ENCODE measurements at regions of chr9 and their contacts with region 1.

Region 1: GRCh38 chr9:130707225-130707976 is 13.8 kb downstream of the EXOSC2 start:
- DNase-seq: peak; percentile 35 to 72 (median 64)
- ATAC-seq: peak; percentile 73
- H3K4me3 ChIP-seq: no peak overlapping the region
- H3K4me3 Mint-ChIP-seq: no peak overlapping the region
- H3K27ac ChIP-seq: no peak overlapping the region
- H3K27ac Mint-ChIP-seq: peak overlapping the region in 4 of 9 donors; percentile 52 to 81 (median 65)
- H3K4me1 ChIP-seq: peaks cover 0 to 4% of the 10 kb centered on the region in 2 donors
- H3K4me1 Mint-ChIP-seq: peaks cover under 1 to 9% (median 2%) of the 10 kb centered on the region in 7 donors
- H3K27me3 ChIP-seq: no peaks in the 10 kb centered on the region
- H3K27me3 Mint-ChIP-seq: no peaks in the 10 kb centered on the region

Region 2: GRCh38 chr9:130693426-130694191 is 13.8 kb before region 1 on chr9 and contains the start of gene EXOSC2:
- CTCF ChIA-PET with region 1: interaction called, 10 read pairs
- POLR2A ChIA-PET with region 1: interaction called, 14 read pairs
- intact Hi-C with region 1: loop called (anchors 1 kb)
- DNase-seq: peak; percentile 76 to 99 (median 89)
- ATAC-seq: peak; percentile 100
- H3K4me3 ChIP-seq: peak within 1 kb of the TSS; percentile 91
- H3K4me3 Mint-ChIP-seq: peak within 1 kb of the TSS; percentile 83 to 98 (median 95)
- H3K27ac ChIP-seq: peak within 1 kb of the TSS; percentile 85
- H3K27ac Mint-ChIP-seq: peak within 1 kb of the TSS; percentile 88 to 97 (median 94)
- H3K4me1 ChIP-seq: peaks cover 13 to 20% of the 10 kb centered on the region in 2 donors
- H3K4me1 Mint-ChIP-seq: peaks cover 20 to 54% (median 46%) of the 10 kb centered on the region in 7 donors
- H3K27me3 ChIP-seq: no peaks in the 10 kb centered on the region
- H3K27me3 Mint-ChIP-seq: no peaks in the 10 kb centered on the region
- total RNA-seq, gene EXOSC2: 44.2 to 60.7 (median 59.5) TPM

Region 3: GRCh38 chr9:130732131-130732530 is 24.7 kb after region 1 on chr9:
- CTCF ChIA-PET with region 1: interaction called, 4 read pairs
- POLR2A ChIA-PET with region 1: no interaction called
- intact Hi-C with region 1: loop called in 1 of 2 experiments (anchors 1 kb)
- DNase-seq: no peak
- ATAC-seq: no peak
- H3K4me3 ChIP-seq: no peak overlapping the region
- H3K4me3 Mint-ChIP-seq: no peak overlapping the region
- H3K27ac ChIP-seq: no peak overlapping the region
- H3K27ac Mint-ChIP-seq: no peak overlapping the region
- H3K4me1 ChIP-seq: no peaks in the 10 kb centered on the region
- H3K4me1 Mint-ChIP-seq: peaks cover 8 to 40% (median 22%) of the 10 kb centered on the region in 7 donors
- H3K27me3 ChIP-seq: no peaks in the 10 kb centered on the region
- H3K27me3 Mint-ChIP-seq: no peaks in the 10 kb centered on the region

Region 4: GRCh38 chr9:130866474-130866965 is 159.1 kb after region 1 on chr9:
- CTCF ChIA-PET with region 1: interaction called, 8 read pairs
- POLR2A ChIA-PET with region 1: no interaction called
- intact Hi-C with region 1: loop called (anchors 1 kb)
- DNase-seq: peak; percentile 8 to 54 (median 40)
- ATAC-seq: peak; percentile 56
- H3K4me3 ChIP-seq: no peak overlapping the region
- H3K4me3 Mint-ChIP-seq: no peak overlapping the region
- H3K27ac ChIP-seq: no peak overlapping the region
- H3K27ac Mint-ChIP-seq: no peak overlapping the region
- H3K4me1 ChIP-seq: no peaks in the 10 kb centered on the region
- H3K4me1 Mint-ChIP-seq: peaks cover 2 to 9% (median 5%) of the 10 kb centered on the region in 7 donors
- H3K27me3 ChIP-seq: no peaks in the 10 kb centered on the region
- H3K27me3 Mint-ChIP-seq: no peaks in the 10 kb centered on the region

Region 5: GRCh38 chr9:130940693-130941576 is 233.5 kb after region 1 on chr9:
- CTCF ChIA-PET with region 1: no interaction called
- POLR2A ChIA-PET with region 1: no interaction called
- intact Hi-C with region 1: loop called in 1 of 2 experiments (anchors 2 kb)
- DNase-seq: peak; percentile 30 to 78 (median 56)
- ATAC-seq: peak; percentile 83
- H3K4me3 ChIP-seq: no peak overlapping the region
- H3K4me3 Mint-ChIP-seq: peak overlapping the region in 8 of 10 donors; percentile 10 to 62 (median 52)
- H3K27ac ChIP-seq: no peak overlapping the region
- H3K27ac Mint-ChIP-seq: peak overlapping the region in 1 of 9 donors; percentile 52
- H3K4me1 ChIP-seq: no peaks in the 10 kb centered on the region
- H3K4me1 Mint-ChIP-seq: peaks cover 0 to 15% (median 10%) of the 10 kb centered on the region in 7 donors
- H3K27me3 ChIP-seq: peaks cover 0 to 2% of the 10 kb centered on the region in 2 donors
- H3K27me3 Mint-ChIP-seq: peaks cover 34 to 71% (median 58%) of the 10 kb centered on the region in 5 donors

Region 6: DNA sequence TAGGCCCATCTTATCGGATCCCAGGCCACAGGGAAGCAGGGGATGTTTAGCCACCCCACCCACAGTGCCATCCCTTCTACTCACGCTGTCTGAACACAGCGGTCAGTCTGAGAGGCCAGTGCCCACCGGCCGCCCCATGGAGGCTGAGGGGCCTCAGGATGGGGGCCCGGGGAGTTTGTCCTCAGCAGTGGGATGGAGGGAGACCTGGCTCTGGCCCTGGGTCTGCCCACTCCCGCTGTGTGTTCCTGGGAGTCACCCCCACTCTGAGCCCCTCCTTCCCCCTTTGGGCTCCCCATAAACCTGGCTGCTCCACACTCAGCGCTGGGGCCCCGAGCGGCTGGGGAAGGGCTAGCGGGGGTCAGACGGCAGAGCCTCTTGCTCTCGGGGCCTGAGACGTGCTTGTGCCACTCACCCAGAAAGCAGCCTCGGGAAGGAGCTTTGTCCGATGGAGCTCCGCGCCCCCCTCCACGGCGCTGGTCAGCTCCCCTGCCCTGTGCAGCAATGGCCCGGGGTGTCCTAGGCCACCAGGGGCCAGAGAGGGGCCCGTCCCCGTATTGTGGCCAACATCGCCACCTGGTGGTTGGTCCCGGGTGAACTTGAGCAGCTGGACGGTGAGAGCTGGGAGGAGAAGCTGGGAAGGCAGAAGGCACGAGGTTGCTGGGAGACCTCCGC is 290.7 kb after region 1 on chr9:
- CTCF ChIA-PET with region 1: no interaction called
- POLR2A ChIA-PET with region 1: no interaction called
- intact Hi-C with region 1: loop called in 1 of 2 experiments (anchors 5 kb)
- DNase-seq: peak in 1 of 9 donors; percentile 59
- ATAC-seq: peak; percentile 58
- H3K4me3 ChIP-seq: no peak overlapping the region
- H3K4me3 Mint-ChIP-seq: no peak overlapping the region
- H3K27ac ChIP-seq: no peak overlapping the region
- H3K27ac Mint-ChIP-seq: no peak overlapping the region
- H3K4me1 ChIP-seq: peaks cover 0 to 4% of the 10 kb centered on the region in 2 donors
- H3K4me1 Mint-ChIP-seq: peaks cover 0 to 14% (median 4%) of the 10 kb centered on the region in 7 donors
- H3K27me3 ChIP-seq: no peaks in the 10 kb centered on the region
- H3K27me3 Mint-ChIP-seq: peaks cover 3 to 23% (median 13%) of the 10 kb centered on the region in 5 donors